Heart right ventricle (tissue), 16 donors: ENCODE measurements at regions of chr19 and their contacts with region 1.

Region 1: DNA sequence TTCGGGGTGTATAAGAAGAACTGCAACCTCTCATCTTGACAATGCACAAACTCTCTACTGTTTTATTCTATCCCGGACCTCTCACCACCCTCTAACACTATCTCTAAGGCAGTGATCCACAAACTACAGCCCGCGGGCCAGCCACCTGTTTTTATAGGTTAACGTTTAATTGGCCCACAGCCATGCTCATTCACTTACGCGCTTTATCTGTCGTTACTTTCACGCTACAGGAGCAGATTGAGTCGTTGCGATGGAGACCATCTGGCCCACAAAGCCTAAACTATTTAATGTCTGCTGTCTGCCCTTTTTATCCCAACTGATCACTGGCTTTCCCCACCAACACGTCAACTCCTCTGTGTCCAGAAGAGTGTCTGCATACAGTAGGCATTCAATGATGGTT is 158.9 kb downstream of the CACNA1A start:
- DNase-seq: no peak
- ATAC-seq: no peak
- H3K4me3 ChIP-seq: no peak overlapping the region
- H3K27ac ChIP-seq: no peak overlapping the region
- H3K4me1 ChIP-seq: no peaks in the 10 kb centered on the region
- H3K27me3 ChIP-seq: peaks cover 0 to 30% (median 12%) of the 10 kb centered on the region in 7 donors
- CTCF ChIP-seq: no peak

Region 2: DNA sequence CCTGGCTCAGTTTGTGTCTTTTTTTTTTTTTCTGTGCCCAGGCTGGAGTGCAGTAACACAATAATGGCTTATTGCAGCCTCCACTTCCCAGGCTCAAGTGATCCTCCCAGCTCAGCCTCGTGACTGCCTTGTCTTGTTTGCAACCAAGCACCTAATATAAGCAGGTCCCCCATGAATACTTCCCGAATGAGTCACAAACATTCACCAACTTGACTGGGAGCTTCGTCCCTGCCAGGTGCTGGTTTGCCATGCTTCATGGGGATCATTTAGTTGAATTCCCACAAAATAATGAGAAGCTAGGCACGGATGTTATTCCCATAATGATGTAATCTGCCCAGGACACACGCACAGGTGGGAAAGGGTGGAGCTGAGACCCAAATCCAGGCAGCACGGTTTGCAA is 17.6 kb before region 1 on chr19:
- intact Hi-C with region 1: loop called in 1 of 10 experiments (anchors 1 kb)
- DNase-seq: no peak
- ATAC-seq: no peak
- H3K4me3 ChIP-seq: no peak overlapping the region
- H3K27ac ChIP-seq: no peak overlapping the region
- H3K4me1 ChIP-seq: no peaks in the 10 kb centered on the region
- H3K27me3 ChIP-seq: peaks cover 0 to 7% (median 0%) of the 10 kb centered on the region in 7 donors
- CTCF ChIP-seq: no peak